OCI-LY7 (cell line): ENCODE measurements at regions of chr5 and their contacts with region 1.

Region 1: GRCh38 chr5:157265714-157266285 is at the start of gene CYFIP2:
- DNase-seq: peak; percentile 91
- H3K4me3 ChIP-seq: peak within 1 kb of the TSS; percentile 82
- H3K27ac ChIP-seq: peak within 1 kb of the TSS; percentile 98
- H3K4me1 ChIP-seq: peaks cover 63% of the 10 kb centered on the region
- CTCF ChIP-seq: no peak
- total RNA-seq, gene CYFIP2: 221 and 258 TPM in 2 replicates

Region 2: DNA sequence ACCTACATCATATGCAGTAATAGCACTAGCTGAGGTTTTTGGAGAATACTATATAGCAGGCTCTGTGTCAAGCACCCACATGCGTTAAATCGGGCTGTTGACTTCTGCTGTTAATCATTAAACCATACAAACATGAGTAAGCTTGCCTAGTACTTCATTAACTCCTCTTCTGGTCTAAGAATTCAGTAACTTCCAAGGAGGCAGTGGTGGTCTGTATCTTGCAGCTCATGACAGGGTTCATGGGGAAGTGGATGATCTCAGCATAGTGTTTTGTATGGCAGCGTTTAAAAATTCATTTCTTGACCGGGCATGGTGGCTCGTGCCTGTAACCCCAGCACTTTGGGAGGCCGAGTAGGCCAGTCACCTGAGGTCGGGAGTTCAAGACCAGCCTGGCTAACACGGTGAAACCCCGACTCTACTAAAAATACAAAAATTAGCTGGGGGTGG is 206.7 kb before region 1 on chr5 and contains the start of gene HAVCR1:
- CTCF ChIA-PET with region 1: no interaction called
- POLR2A ChIA-PET with region 1: no interaction called
- intact Hi-C with region 1: no loop called
- DNase-seq: no peak
- H3K4me3 ChIP-seq: no peak within 1 kb of the TSS
- H3K27ac ChIP-seq: no peak within 1 kb of the TSS
- H3K4me1 ChIP-seq: no peaks in the 10 kb centered on the region
- CTCF ChIP-seq: no peak
- total RNA-seq, gene HAVCR1: 0.13 TPM in 1 of 2 replicates, not detected in the other

Region 3: DNA sequence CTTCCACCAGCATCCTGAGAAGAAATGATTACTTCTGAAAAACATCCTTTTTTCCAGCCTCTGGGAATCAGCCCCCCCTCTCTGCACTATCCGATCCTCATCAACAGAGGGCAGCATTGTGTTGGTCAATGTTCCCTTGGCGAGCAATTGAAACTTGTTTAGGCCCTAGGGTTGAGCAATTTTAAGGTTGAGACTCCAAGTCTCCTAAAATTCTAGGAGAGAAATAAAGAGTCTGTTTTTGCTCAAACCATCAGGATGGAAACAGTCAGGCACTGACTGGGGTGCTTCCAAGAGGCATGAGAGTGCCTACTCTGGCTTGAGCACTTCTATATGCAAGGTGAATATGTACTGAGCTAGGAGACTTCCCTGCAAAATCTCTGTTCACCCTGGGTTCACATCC is 12.3 kb before region 1 on chr5:
- CTCF ChIA-PET with region 1: interaction called, 6 read pairs
- POLR2A ChIA-PET with region 1: interaction called, 10 read pairs
- intact Hi-C with region 1: no loop called
- DNase-seq: peak; percentile 71
- H3K4me3 ChIP-seq: peak overlapping the region; percentile 7
- H3K27ac ChIP-seq: peak overlapping the region; percentile 16
- H3K4me1 ChIP-seq: peaks cover 10% of the 10 kb centered on the region
- CTCF ChIP-seq: peak; percentile 99

Region 4: DNA sequence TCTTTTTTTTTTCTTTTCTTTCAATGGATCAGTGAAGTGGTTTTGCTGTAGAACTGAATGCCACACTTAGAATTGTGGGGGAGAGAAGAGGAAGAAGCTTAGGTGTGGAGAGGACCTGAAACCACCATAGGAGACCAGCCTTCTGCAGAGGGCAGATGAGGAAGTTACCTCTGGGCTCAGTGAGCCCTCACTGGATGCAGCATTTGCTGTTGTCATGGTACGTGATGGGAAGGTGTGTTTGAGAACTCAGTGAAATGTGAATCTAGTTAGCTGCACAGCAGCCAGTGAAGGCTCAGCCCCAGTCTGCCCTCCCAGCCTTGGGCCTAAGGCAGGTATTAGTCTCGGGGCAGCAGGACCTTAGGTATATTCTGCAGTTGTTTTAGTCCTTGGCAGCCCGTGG is 17.6 kb after region 1 on chr5:
- CTCF ChIA-PET with region 1: no interaction called
- POLR2A ChIA-PET with region 1: interaction called, 11 read pairs
- intact Hi-C with region 1: loop called (anchors 1 kb)
- DNase-seq: peak; percentile 89
- H3K4me3 ChIP-seq: peak overlapping the region; percentile 14
- H3K27ac ChIP-seq: peak overlapping the region; percentile 59
- H3K4me1 ChIP-seq: peaks cover 29% of the 10 kb centered on the region
- CTCF ChIP-seq: no peak

Region 5: DNA sequence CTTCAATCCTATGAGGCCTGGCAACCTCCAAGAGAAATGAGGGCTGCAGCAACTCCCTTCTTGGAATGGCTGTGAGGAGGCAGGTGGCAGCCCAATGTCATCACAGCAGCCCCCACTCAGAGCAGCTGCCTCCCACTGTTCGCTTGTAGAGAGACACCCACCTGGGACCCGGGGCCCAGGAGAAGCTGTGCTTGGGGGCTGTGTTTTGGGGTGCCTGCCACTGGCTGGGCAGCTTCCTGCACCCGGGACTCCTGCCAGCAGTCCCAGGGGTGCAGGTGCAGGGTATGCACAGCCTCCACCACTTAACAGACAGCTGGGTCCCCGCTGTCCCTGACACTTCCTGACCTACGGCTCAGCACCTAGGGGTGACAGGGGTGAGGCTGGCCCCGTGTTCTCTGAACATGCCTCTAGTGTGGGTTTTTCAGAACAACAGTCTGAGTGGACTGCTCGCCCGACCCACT is 220.5 kb after region 1 on chr5:
- CTCF ChIA-PET with region 1: no interaction called
- POLR2A ChIA-PET with region 1: no interaction called
- intact Hi-C with region 1: loop called (anchors 5 kb)
- DNase-seq: peak; percentile 81
- H3K4me3 ChIP-seq: peak overlapping the region; percentile 22
- H3K27ac ChIP-seq: peak overlapping the region; percentile 96
- H3K4me1 ChIP-seq: peaks cover 57% of the 10 kb centered on the region
- CTCF ChIP-seq: no peak

Region 6: DNA sequence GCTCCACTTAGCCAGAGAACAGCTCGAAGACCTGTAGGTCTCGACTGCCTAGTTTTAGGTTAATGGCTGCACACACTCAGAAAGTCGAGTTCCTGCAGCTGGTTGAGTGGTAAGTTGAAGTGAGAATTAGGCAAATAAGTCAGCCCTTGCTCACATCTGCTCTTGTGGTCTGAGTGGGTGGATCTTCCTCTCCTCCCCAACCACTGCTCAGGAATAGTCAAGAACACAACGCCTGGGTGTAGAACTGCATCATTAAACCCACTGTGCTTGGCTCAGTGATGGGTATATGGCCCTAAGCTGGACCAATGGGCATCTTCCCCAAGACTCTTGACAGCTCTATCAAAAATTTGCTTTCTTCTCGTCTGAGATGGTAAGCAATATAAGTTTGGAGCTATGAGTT is 330.7 kb after region 1 on chr5:
- CTCF ChIA-PET with region 1: no interaction called
- POLR2A ChIA-PET with region 1: no interaction called
- intact Hi-C with region 1: loop called (anchors 2 kb)
- DNase-seq: peak; percentile 94
- H3K4me3 ChIP-seq: peak overlapping the region; percentile 18
- H3K27ac ChIP-seq: peak overlapping the region; percentile 83
- H3K4me1 ChIP-seq: peaks cover 96% of the 10 kb centered on the region
- CTCF ChIP-seq: no peak

Region 7: DNA sequence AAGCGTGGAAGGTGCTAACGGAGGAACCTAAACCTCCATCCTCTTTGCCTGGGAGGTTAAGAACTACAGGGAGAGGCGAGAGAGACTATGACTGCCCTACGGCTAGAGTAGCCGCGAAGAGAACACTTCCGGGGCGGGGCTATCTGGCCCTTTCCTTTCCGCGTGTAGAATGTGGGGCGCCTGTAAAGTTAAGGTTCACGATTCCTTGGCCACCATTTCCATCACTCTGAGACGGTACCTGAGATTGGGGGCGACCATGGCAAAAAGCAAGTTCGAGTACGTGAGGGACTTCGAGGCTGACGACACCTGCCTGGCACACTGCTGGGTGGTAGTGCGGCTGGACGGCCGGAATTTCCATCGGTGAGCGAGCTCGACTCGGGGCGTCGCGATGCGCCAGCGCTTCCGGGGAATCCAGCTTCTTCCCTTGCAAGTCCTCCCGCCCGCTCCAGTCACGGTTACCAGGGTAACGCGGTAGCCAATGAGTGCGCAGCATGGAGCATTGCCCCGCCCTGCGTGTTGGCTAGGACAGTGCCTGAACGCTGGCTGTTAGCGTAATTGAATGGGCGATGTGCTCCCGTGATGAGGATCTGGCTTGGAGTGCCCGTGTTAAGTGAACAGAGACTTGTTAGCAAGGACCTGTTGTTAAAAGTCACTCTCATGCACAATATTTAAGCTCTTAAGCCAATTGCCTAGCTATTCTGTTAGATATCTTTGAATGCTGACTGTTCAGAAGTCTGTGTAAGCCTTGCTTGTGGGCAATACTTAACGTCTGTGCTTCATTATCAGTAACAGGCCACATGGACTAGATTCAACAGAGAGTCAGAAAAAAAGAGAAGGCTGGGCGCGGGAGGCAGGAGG is 465.7 kb after region 1 on chr5 and contains the start of gene THG1L:
- CTCF ChIA-PET with region 1: no interaction called
- POLR2A ChIA-PET with region 1: interaction called, 6 read pairs
- intact Hi-C with region 1: loop called (anchors 5 kb)
- DNase-seq: peak; percentile 96
- H3K4me3 ChIP-seq: peak within 1 kb of the TSS; percentile 75
- H3K27ac ChIP-seq: peak within 1 kb of the TSS; percentile 88
- H3K4me1 ChIP-seq: peaks cover 30% of the 10 kb centered on the region
- CTCF ChIP-seq: no peak
- total RNA-seq, gene THG1L: 20.7 and 30.5 TPM in 2 replicates